Left ventricle myocardium superior (tissue), 1 donor: ENCODE measurements at regions of chr2 and their contacts with region 1.

Region 1: GRCh38 chr2:60998628-60999545 is 18.6 kb upstream of the PEX13 start:
- DNase-seq: no peak
- ATAC-seq: no peak

Region 2: DNA sequence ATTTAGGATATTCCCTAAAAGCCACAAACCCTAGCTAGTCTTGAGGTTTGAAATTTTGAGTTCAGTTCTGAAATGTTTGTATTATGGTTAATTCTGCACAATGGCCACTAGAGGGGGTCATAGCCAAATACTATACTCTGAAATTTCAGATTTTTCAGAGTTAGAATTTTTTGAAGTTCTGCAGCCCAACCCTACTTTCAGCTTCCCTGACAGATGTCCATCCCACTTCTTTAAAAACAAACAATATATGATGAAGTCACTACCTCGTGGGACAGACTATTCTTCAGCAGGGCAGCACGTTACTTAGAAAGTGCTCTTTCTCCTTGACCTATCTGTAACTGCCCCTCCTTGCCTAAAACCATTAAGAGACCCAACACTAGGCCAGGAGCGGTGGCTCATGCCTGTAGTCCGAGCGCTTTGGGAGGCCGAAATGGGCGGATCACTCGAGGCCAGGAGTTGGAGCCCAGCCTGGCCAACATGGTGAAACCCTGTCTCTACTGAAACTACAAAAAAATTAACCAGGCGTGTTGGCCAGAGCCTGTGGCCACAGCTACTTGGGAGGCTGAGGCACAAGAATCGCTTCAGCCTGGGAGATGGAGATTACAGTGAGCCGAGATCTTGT is 291.0 kb before region 1 on chr2:
- intact Hi-C with region 1: loop called (anchors 5 kb)
- DNase-seq: no peak
- ATAC-seq: no peak